ENCODE measurements at regions of chr7 and their contacts with region 1.

Region 1: DNA sequence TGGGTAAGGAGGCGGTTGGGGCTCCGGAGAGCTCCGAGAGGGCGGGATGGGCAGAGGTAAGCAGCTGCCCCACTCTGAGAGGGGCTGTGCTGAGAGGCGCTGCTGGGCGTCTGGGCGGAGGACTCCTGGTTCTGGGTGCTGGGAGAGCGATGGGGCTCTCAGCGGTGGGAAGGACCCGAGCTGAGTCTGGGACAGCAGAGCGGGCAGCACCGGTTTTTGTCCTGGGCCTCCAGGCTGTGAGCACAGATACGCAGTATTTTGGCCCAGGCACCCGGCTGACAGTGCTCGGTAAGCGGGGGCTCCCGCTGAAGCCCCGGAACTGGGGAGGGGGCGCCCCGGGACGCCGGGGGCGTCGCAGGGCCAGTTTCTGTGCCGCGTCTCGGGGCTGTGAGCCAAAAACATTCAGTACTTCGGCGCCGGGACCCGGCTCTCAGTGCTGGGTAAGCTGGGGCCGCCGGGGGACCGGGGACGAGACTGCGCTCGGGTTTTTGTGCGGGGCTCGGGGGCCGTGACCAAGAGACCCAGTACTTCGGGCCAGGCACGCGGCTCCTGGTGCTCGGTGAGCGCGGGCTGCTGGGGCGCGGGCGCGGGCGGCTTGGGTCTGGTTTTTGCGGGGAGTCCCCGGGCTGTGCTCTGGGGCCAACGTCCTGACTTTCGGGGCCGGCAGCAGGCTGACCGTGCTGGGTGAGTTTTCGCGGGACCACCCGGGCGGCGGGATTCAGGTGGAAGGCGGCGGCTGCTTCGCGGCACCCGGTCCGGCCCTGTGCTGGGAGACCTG is 26.0 kb downstream of the PRSS2 start:
- DNase-seq: no peak
- ATAC-seq: peak; percentile 36 to 61 (median 48)
- H3K4me3 ChIP-seq: peak overlapping the region; percentile 67
- H3K27ac ChIP-seq: no peak overlapping the region
- H3K4me1 ChIP-seq: peaks cover 5% of the 10 kb centered on the region
- H3K27me3 ChIP-seq: peaks cover 2 to 43% (median 8%) of the 10 kb centered on the region in 3 donors
- CTCF ChIP-seq: no peak

Region 2: DNA sequence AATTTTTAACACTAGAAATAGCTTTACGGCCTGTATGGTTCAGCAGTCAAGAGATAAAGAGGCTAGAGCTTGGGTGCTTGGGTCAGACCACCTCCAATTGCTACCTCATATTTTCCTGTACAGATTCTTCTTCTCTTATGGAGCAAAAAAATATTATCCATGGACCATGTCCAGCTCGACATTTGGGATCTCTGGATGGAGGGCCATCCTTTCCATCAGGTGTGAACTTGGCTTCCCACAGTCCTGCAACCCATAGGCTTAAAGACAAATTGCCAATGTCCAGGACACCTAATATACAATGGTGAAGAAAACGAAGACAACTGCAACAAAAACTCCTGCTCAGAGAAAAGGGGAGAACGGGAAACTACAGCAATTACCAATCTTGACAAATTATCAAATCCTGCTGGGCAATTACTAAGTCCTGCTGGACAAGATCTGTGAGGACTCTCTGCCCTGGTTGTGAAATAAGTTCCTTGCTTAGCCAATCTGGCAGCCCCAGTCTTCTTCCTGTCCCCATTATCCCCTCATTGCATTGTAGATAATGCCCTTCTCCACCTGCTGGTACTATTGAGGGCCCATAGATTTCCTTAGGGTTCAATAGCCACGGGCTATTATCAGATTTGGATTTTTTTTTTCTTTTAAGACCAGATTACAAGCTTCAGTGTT is 1830.1 kb before region 1 on chr7:
- intact Hi-C with region 1: no loop called
- DNase-seq: no peak
- ATAC-seq: no peak
- H3K4me3 ChIP-seq: no peak overlapping the region
- H3K27ac ChIP-seq: no peak overlapping the region
- H3K4me1 ChIP-seq: no peaks in the 10 kb centered on the region
- H3K27me3 ChIP-seq: no peaks in the 10 kb centered on the region
- CTCF ChIP-seq: no peak

Region 3: DNA sequence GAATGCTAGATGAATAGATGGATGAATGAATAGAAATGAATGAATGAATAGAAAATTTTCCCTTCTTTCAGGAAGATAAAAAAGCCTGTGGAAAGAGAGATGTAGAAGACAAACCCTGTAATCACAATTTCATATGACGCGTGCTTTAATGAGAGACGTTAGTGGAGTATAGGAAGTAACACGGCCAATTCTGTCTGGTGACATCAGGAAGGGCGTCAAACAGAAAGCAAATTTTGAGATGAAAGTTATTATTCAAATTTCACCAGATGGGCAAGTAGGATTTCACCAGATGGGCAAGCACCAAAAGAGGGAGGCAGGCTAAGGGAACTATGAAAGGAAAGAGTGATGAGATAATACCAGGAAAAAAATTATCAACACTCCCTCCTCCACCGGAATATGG is 176.4 kb before region 1 on chr7:
- intact Hi-C with region 1: loop called in 1 of 2 experiments (anchors 5 kb)
- DNase-seq: no peak
- ATAC-seq: no peak
- H3K4me3 ChIP-seq: no peak overlapping the region
- H3K27ac ChIP-seq: no peak overlapping the region
- H3K4me1 ChIP-seq: no peaks in the 10 kb centered on the region
- H3K27me3 ChIP-seq: no peaks in the 10 kb centered on the region
- CTCF ChIP-seq: no peak

Region 4: DNA sequence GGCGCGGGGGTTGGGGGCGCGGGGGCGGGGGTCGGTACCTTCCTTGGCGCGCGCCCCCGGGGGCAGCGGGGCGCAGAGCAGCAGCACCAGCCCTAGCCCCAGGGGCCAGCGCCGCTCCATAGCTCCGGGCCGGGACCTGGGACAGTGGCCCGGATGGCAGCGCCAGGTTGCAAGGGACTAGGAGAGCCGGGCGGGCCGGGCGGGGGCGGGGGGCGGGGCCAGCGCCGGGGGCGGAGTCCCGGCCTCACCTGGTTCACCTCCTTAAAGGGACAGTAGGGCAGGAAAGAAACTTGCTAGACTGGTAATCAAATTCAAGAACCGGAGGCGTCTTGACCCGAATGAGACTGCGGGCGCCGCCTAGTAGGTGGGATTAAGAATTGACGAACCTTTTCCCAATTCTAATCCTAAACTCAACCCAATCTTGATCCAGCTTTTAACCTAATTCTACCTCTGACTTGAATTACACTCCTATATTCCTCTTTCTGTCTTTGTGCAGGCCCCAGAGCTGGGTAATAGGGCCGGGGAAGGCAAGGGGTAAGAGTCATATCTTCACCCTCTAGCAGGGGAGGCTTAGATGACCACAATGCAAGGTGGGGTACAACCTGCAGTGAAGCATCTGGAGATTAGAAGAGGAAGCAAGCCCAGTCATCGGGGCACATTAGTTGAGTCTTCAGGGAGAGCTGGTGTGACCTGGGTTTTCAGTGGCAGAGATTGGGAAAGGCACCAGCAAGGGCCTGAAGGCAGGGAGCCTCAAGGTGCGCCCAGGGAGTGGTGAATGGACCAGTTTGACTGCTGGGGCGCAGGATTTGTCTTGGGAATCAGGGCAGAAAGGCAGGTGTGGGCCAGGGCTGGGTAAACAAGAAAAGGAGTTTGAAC is 612.1 kb after region 1 on chr7 and contains the start of gene EPHA1:
- intact Hi-C with region 1: loop called in 1 of 2 experiments (anchors 5 kb)
- DNase-seq: no peak
- ATAC-seq: no peak
- H3K4me3 ChIP-seq: no peak within 1 kb of the TSS
- H3K27ac ChIP-seq: no peak within 1 kb of the TSS
- H3K4me1 ChIP-seq: no peaks in the 10 kb centered on the region
- H3K27me3 ChIP-seq: no peaks in the 10 kb centered on the region
- CTCF ChIP-seq: no peak
- total RNA-seq, gene EPHA1: 0.28 to 0.38 TPM in 2 of 4 donors, not detected in the others

Measured in psoas muscle (tissue), 8 donors.